Activated CD4-positive, alpha-beta T cell treated with anti-CD3 and anti-CD28 coated beads for 36 hours (primary cell): ENCODE measurements at regions of chr20 and their contacts with region 1.

Region 1: DNA sequence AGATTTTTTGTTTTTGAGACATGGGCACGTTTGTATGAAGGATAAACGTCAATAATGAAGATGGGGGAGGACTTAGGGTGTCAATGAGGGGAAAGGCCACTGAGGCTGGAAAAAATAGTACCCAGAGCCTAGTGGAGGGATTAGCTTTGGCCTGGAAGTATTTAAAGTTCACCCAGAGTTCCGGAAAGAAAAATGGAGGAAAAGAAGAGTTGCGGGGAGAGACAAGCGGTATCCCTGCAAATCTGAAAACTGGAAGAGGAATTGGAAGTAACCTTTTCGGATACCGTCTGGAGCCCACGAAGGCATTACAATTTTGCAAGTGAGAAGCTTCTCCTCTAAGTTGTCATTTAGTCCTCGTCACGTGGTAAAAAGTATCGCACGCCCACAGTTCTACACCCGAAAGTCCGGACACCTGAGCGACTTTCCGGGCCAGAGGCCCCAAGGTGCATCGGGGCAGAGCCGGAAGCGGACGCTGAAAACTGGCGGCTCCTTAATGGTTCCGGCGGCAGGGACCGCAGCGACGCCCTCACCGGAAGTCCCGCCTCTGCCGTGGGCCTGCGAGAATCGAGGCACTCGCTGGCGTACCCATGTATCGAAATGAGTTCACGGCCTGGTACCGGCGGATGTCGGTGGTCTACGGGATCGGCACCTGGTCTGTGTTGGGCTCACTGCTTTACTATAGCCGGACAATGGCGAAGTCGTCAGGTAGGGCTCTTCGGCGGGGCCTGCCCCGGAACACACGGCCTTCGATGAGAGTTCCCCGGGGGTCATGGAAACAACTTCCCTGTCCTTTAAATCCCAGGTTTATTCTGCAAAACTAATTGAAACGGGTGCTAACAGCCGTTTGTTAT is at the start of gene SMIM26:
- DNase-seq: peak; percentile 97
- ATAC-seq: peak; percentile 100
- H3K4me3 Mint-ChIP-seq: peak within 1 kb of the TSS; percentile 98
- H3K27ac Mint-ChIP-seq: peak within 1 kb of the TSS; percentile 92
- H3K4me1 Mint-ChIP-seq: peaks cover 13% of the 10 kb centered on the region
- H3K27me3 Mint-ChIP-seq: no peaks in the 10 kb centered on the region
- total RNA-seq, gene SMIM26: 64.4 to 66.2 TPM

Region 2: DNA sequence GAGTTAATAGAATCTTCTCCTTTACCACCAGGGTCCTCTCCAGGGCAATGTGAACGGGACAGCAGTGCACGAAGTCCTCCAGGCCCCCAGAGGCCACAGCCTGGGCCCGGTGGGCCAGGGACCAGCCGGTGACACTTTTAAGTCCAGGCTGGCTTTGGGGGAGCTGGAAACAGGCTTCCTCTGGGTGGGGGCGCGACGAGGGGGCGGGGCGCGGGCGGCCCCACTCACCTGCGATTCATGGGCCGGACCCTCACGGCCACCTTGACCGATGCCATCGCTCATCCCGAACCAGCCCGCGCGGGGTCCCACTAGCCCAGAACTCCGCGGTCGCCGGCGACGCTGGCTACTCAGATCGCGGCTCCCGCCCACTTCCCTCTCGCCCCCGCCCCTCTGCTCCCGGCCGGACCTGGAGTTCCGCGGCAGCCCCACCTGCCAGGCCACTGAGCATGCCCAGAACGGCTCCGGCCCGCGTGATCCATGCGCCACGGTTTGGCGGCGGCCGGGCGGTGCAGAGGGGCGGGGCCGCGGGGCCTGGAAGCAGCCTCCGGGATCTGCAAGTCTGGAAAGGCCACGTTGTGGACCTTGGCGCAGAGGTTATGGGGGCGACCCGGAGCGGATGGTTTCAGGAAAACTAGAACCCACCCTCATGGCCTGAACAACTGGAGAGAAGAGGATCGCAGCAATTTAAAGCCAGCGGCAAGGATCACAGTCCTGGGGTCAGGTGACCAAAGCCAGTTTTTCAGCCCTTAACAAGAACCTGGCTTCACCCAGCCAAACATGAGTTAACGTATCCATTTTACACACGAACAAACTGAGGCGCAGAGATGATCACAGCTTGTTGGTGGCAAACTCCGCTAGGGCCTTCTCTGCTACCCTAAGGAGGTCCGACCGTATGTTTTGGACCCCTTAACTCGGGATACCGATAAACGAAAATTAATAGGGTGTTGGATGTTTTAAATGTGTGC is 1993.8 kb before region 1 on chr20 and contains the start of gene KIF16B:
- CTCF ChIA-PET with region 1: no interaction called
- POLR2A ChIA-PET with region 1: no interaction called
- intact Hi-C with region 1: loop called in 1 of 2 experiments (anchors 10 kb)
- DNase-seq: peak; percentile 92
- ATAC-seq: peak; percentile 87
- H3K4me3 Mint-ChIP-seq: peak within 1 kb of the TSS; percentile 85
- H3K27ac Mint-ChIP-seq: peak within 1 kb of the TSS; percentile 79
- H3K4me1 Mint-ChIP-seq: peaks cover 42% of the 10 kb centered on the region
- H3K27me3 Mint-ChIP-seq: no peaks in the 10 kb centered on the region
- total RNA-seq, gene KIF16B: 7.5 to 8.7 TPM

Region 3: DNA sequence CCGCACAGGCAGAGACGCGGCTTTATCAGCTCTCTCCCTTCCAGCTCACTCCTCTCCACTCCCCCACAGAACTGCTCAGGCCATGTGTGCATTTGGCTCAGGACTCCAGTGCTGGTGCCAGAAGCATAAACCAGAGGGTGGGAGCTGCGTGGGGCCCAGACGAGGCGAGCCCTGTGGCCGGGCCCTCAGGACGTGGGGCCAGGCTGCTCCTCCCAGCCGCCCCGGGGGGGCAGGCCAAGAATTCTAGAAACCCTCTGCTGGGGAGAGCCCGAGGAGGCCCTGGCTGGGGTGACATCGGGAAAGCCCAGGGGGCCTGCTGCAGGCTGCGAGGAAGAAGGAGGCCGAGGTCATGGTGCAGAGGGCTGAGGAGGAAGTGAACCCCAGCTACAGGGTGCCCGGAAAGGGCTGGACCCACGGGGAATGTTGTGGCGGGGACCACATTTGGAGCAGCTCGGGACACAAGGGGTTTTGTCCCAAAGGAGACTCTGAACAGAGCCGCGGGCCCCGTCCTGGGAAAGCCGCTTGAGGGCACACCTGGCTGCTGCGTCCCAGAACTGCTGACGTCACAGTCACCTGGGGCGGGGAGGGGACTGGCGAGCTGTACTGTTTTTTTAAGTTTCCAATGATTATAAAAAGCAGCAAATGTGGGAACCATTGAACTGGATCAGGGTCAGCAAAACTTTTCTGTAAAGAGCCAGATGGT is 760.2 kb before region 1 on chr20:
- CTCF ChIA-PET with region 1: no interaction called
- POLR2A ChIA-PET with region 1: no interaction called
- intact Hi-C with region 1: no loop called
- DNase-seq: no peak
- ATAC-seq: no peak
- H3K4me3 Mint-ChIP-seq: no peak overlapping the region
- H3K27ac Mint-ChIP-seq: no peak overlapping the region
- H3K4me1 Mint-ChIP-seq: no peaks in the 10 kb centered on the region
- H3K27me3 Mint-ChIP-seq: no peaks in the 10 kb centered on the region

Region 4: DNA sequence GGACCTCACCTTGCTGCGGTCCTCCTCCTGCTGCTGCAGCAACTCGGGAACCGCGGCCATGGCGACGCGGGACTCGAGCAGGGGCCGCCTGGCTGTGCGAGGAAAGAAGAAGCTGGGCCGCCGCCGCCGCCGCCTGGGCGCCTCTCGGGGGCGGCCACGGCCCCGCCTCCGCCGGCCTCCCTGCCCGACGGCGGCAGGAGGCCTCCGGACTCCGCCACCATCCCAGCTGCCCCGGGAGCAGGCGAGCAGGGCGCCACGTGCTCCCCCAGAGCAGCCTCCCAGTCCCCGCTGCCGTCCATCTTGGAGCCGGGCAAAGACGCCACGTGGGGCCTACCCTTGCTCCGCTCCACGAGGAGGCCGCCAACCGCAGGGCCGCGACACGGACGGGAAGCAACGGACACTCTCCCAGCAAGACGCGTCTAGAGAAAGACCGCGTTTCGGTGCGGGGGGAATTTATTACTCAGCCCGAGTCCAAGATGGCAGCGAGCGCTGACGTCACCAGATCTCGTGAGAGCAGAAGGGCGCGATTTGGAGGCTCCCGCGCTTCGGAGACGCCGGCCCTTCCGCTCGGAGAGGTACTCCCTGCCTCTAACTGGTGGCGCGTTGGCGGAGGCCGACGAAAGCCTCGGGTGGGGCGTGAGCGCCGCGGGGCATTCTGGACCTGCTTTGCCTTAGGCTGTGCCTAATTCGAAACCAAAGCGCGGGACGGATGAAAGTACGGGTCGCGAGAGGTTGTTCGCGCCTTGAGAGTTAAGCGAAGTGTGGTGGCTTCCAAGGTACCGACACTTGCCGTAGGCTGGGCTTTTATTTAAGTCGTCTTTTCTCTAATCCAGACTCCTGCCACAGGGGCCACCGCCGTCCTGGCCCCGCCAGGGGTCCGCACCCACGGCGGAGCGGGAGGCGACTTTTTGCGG is 598.5 kb before region 1 on chr20 and contains the starts of genes MGME1 and SNX5:
- CTCF ChIA-PET with region 1: no interaction called
- POLR2A ChIA-PET with region 1: no interaction called
- intact Hi-C with region 1: loop called (anchors 1 to 10 kb)
- DNase-seq: peak; percentile 100
- ATAC-seq: peak; percentile 91
- H3K4me3 Mint-ChIP-seq: peak within 1 kb of the TSS; percentile 87
- H3K27ac Mint-ChIP-seq: peak within 1 kb of the TSS; percentile 99
- H3K4me1 Mint-ChIP-seq: peaks cover 49% of the 10 kb centered on the region
- H3K27me3 Mint-ChIP-seq: no peaks in the 10 kb centered on the region
- total RNA-seq, gene MGME1: 24.1 to 29.7 TPM
- total RNA-seq, gene SNX5: 204 to 227 TPM

Region 5: GRCh38 chr20:18587665-18588573 is 20.8 kb after region 1 on chr20 and contains the start of gene DTD1:
- CTCF ChIA-PET with region 1: interaction called, 3 read pairs
- POLR2A ChIA-PET with region 1: no interaction called
- intact Hi-C with region 1: loop called (anchors 1 kb)
- DNase-seq: peak; percentile 96
- ATAC-seq: peak; percentile 92
- H3K4me3 Mint-ChIP-seq: peak within 1 kb of the TSS; percentile 89
- H3K27ac Mint-ChIP-seq: peak within 1 kb of the TSS; percentile 82
- H3K4me1 Mint-ChIP-seq: peaks cover 25% of the 10 kb centered on the region
- H3K27me3 Mint-ChIP-seq: peaks cover 6% of the 10 kb centered on the region
- total RNA-seq, gene DTD1: 40.7 to 54.6 TPM

Region 6: DNA sequence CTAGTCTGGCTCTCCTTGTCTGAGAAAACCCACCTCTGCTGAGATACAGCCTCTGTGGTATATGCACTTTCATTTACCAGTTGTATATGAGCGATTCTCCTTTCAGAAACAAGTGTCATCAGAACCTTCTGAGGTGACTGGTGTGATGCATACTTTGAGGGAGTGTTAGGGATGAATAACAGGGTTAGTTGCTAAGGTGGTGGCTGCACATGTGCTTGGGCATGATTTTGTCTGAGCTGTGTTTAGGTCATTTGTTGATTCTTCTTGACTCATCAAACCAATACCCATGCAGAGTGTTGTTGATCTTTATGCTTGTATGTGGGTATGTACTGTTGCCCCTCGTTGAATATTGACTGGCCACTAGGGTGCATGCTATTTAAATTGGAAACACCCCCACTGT is 46.4 kb after region 1 on chr20:
- CTCF ChIA-PET with region 1: no interaction called
- POLR2A ChIA-PET with region 1: no interaction called
- intact Hi-C with region 1: loop called in 1 of 2 experiments (anchors 1 kb)
- DNase-seq: peak; percentile 39
- ATAC-seq: peak; percentile 95
- H3K4me3 Mint-ChIP-seq: no peak overlapping the region
- H3K27ac Mint-ChIP-seq: no peak overlapping the region
- H3K4me1 Mint-ChIP-seq: peaks cover 8% of the 10 kb centered on the region
- H3K27me3 Mint-ChIP-seq: no peaks in the 10 kb centered on the region

Region 7: DNA sequence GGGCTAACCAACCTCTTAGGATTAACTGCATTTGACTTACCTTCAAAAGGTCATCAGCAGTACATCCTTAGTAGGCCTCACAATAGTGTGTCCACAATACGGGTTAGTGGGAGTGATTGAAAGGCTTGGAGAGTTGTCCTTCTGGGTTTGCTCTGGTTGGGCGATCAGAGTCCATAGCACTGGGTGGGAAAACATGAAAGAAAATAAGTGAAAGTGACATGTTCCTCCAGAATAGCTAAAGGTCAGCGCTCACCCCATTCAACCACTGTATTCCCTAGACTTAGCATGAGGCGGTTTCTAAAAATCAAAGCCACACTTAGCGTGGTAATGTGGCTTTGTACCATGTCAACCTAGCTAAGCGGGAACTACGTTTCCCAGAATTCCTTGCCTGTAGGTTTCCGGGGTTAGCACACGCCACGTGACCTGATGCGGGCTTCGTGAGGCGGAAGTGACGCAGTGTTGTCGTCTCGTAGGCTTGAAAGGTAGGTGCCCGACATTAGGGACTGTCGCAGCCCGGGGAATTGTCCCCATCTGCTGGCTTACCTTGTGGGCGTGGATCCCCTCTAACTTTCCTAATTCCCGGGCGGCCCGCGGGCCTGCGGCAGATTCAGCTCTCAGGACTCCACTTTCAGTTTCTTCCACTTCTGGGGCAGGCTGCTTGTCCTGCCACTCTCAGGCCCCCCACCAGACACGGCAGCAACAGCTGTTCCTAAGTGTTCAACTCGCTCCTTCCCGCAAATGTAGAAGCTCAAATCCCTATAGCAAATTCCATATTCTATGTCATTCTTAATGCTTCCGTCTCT is 226.7 kb after region 1 on chr20:
- CTCF ChIA-PET with region 1: no interaction called
- POLR2A ChIA-PET with region 1: no interaction called
- intact Hi-C with region 1: loop called (anchors 1 kb)
- DNase-seq: peak; percentile 92
- ATAC-seq: peak; percentile 98
- H3K4me3 Mint-ChIP-seq: peak overlapping the region; percentile 87
- H3K27ac Mint-ChIP-seq: peak overlapping the region; percentile 96
- H3K4me1 Mint-ChIP-seq: peaks cover 17% of the 10 kb centered on the region
- H3K27me3 Mint-ChIP-seq: peaks cover 7% of the 10 kb centered on the region